ENCODE measurements at regions of chr5 and their contacts with region 1.

Region 1: DNA sequence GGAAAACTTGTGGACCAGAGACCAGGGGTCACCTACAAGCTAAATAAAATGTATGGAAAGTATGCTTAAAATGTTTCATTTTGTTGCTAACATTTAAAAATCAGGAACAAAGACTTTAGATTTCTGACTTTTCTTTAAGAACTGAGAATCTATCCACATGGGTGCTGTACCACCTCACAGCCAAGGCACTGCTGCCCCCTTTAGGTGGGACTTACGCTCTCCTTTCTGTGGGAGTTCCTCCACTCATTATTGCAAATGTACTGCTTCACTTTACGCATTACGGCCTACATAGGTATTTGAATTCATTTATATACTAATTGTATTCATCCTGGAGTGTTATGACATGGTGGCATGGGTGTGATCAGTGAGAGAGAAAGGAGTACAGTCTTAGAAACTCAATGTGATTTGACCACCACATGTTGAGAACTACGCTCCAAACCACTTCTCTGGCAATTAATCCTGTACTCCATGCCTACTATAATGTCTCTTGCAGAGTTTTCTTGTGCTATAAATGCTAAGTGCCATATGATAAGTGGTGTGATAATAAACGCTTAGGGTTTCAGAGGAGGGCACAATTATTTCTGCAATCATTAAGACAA is 24.7 kb upstream of the CETN3 start:
- DNase-seq: peak in 2 of 3 donors; percentile 53 to 74
- ATAC-seq: peak; percentile 56
- H3K4me3 ChIP-seq: no peak overlapping the region
- H3K4me1 ChIP-seq: no peaks in the 10 kb centered on the region
- CTCF ChIP-seq: no peak

Region 2: GRCh38 chr5:90529939-90530677 is 95.9 kb after region 1 on chr5:
- intact Hi-C with region 1: loop called (anchors 5 to 10 kb)
- DNase-seq: peak in 2 of 3 donors; percentile 51 to 71
- ATAC-seq: peak; percentile 70
- H3K4me3 ChIP-seq: peak overlapping the region; percentile 62
- H3K4me1 ChIP-seq: peaks cover 28% of the 10 kb centered on the region
- CTCF ChIP-seq: peak; percentile 40